ENCODE measurements at regions of chr17 and their contacts with region 1.

Region 1: DNA sequence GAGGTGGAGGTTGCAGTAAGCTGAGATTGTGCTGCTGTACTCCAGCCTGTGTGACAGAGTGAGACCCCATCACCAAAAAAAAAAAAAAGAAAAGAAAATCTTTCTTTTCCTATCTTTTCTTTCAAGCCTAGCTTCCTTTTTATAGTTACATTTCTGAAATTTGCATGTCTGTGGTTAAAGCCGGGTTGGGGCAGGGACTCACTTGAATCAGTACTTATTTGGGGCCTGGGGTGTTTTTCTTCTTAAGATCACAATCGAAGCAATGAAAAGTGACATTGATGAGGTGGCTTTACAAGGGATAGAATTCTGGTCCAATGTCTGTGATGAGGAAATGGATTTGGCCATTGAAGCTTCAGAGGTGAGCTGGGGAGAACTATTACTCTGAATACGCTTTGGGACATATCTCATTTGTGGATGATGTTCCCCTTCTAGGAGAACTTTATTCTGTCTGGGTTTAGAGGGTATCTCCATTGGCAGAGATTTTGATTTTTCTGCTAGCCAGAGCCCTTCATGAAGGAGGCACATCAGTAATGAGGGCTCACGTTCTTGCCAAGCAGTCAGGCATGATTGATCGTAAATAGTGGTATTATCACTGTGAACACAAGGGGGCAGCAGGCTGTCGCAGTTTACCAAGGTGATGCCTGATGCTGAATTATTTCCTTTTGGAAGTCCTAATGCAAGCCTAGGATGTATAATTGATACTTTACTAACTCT is 14.3 kb downstream of the KPNB1 start:
- DNase-seq: no peak
- H3K4me3 ChIP-seq: no peak overlapping the region
- CTCF ChIP-seq: peak; percentile 72

Region 2: GRCh38 chr17:47629826-47630225 is 34.2 kb before region 1 on chr17:
- CTCF ChIA-PET with region 1: no interaction called
- POLR2A ChIA-PET with region 1: no interaction called
- DNase-seq: no peak
- H3K4me3 ChIP-seq: no peak overlapping the region
- CTCF ChIP-seq: no peak

Region 3: DNA sequence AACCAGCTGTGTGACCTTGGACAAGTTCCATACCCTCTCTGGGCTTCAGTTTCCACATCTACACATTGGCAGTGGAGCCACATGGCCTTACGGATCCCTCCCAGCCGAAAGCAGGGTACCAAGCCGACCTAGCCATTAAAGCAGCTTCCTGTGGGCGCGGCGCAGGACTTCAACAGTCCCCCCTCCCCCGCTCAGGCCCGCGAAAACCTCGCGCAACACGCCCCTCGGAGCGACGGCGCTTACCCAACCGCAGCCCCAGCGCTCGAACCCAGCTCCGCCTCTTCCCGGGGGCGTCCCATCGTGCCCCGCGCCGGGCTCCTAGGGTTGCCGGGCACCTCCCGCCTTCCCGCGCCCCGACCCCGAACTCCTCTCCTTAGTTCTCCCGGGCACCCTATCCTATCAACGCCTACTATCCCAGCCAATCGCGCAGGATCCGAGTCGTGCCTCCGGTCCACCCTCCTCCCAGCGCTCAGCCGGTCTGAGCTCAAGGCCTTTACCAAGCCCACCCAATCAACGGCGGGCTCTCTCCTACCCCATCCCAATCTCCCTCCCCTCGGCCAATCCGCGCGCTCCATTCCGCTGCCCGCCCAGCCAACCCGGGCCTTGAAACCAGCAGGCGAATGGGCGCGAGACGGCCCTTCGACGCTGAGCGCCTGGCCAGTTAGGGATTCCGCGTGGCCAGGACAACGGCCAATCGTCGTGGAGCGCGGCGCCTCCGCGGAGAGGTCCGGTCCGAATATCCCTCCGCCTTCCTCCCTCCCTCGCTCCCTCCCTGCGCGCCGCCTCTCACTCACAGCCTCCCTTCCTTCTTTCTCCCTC is 14.7 kb before region 1 on chr17 and contains the start of gene KPNB1:
- CTCF ChIA-PET with region 1: interaction called, 115 read pairs
- POLR2A ChIA-PET with region 1: interaction called, 4 read pairs
- DNase-seq: peak; percentile 100
- H3K4me3 ChIP-seq: peak within 1 kb of the TSS; percentile 78
- CTCF ChIP-seq: no peak

Region 4: GRCh38 chr17:47675380-47676198 is 11.5 kb after region 1 on chr17:
- CTCF ChIA-PET with region 1: interaction called, 83 read pairs
- POLR2A ChIA-PET with region 1: interaction called, 3 read pairs
- DNase-seq: no peak
- H3K4me3 ChIP-seq: no peak overlapping the region
- CTCF ChIP-seq: no peak

Region 5: DNA sequence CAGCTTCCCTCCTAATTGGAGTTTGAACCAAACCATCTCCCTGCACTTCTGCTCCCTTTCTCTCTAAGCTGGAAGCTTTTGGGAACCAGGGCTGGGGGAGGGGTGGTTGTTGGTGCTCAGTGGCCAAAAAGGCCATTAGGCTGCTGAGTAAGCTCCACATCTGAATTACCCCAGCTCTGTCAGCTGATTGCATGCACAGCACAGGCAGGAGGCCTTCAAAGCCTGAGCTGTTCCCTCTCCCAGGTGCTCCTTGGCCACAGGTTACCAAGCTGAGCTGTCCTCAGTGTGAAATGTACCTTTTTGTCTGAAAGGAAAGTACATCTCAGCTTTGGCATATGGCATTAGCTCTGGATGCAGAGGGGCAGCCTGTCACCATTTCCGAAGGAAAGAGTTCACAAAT is 23.7 kb after region 1 on chr17:
- CTCF ChIA-PET with region 1: interaction called, 12 read pairs
- POLR2A ChIA-PET with region 1: interaction called, 4 read pairs
- DNase-seq: no peak
- H3K4me3 ChIP-seq: no peak overlapping the region
- CTCF ChIP-seq: no peak

Region 6: GRCh38 chr17:47698749-47699535 is 34.9 kb after region 1 on chr17:
- CTCF ChIA-PET with region 1: interaction called, 27 read pairs
- POLR2A ChIA-PET with region 1: interaction called, 4 read pairs
- DNase-seq: no peak
- H3K4me3 ChIP-seq: no peak overlapping the region
- CTCF ChIP-seq: peak; percentile 80

Region 7: DNA sequence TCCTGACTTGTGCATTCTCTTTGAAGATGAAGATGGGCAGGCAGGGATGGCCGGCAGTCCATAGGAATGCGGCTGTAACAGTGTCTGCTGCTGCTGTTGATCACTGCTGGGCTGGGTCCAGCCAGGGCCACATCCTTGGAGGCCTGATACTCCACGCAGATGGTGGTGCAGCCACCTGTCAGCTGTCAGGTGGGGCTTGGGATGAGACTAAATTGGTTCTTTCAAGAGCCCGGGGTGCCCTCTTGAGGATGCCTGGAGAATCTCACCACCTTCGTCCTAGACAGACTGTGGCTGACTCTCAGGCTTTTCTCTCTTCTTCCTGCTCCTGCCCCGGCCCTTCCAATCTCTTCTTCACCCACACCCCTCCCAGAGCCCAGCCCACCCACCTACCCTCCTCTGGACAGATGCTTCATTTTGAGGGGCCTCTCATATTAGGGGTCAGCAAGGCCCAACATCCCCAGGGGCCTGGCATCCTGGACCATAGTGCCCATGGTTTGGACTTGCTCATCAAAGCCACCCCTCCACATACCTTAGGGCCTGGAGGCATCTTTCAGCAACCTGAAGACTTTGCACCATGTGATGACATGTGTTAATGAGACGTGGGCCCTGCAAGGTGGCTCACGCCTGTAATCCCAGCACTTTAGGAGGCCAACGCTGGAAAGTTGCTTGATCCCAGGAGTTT is 138.4 kb after region 1 on chr17:
- CTCF ChIA-PET with region 1: interaction called, 10 read pairs
- POLR2A ChIA-PET with region 1: no interaction called
- DNase-seq: no peak
- H3K4me3 ChIP-seq: no peak overlapping the region
- CTCF ChIP-seq: peak; percentile 69

Measured in AG04449 (cell line).